Activated T-helper 2 cell treated with anti-CD3 and anti-CD28 coated beads, Interferon-gamma antibody, Interleukin-2, Interleukin-4, amounts not matched to agents 10 μg/mL and 5 μg/mL and 100 μg/mL, durations not matched to agents 14 hours and 24 hours and 36 hours (primary cell): ENCODE measurements at regions of chr11 and their contacts with region 1.

Region 1: DNA sequence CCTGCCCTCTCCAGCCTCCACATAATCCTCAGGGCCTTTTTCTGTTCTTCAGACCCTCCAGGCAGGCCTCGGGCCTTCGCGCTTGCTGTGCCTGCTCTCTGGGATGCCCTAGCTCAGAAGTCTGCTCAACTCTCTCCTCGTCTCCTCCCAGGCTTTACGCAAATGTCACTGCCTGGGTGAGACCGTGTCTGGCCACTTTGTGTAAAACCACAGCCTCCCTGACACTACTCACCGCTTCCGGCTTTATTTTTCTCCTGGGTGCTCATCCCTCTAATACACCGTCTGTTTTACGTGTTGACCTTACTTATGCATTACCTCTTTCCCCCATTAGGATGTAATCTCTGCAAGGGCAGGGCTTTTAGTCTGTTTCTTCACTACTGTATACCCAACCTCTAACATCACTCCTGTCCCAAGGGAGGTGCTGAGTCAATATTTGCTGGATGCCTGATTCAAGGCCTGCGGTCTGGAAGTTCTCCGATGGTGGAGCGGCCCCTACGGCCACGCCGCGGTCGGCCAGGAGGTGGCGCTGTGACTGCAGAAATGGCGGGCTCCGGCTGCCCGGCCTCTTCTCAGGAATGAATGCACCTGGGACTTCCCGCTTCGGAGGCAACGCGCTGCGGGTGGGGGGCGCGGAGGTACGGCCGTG is 58.2 kb upstream of the THY1 start:
- DNase-seq: peak; percentile 57
- H3K4me3 Mint-ChIP-seq: no peak overlapping the region
- H3K27ac Mint-ChIP-seq: no peak overlapping the region
- H3K4me1 Mint-ChIP-seq: peaks cover 2% of the 10 kb centered on the region
- H3K27me3 Mint-ChIP-seq: peaks cover 5% of the 10 kb centered on the region

Region 2: DNA sequence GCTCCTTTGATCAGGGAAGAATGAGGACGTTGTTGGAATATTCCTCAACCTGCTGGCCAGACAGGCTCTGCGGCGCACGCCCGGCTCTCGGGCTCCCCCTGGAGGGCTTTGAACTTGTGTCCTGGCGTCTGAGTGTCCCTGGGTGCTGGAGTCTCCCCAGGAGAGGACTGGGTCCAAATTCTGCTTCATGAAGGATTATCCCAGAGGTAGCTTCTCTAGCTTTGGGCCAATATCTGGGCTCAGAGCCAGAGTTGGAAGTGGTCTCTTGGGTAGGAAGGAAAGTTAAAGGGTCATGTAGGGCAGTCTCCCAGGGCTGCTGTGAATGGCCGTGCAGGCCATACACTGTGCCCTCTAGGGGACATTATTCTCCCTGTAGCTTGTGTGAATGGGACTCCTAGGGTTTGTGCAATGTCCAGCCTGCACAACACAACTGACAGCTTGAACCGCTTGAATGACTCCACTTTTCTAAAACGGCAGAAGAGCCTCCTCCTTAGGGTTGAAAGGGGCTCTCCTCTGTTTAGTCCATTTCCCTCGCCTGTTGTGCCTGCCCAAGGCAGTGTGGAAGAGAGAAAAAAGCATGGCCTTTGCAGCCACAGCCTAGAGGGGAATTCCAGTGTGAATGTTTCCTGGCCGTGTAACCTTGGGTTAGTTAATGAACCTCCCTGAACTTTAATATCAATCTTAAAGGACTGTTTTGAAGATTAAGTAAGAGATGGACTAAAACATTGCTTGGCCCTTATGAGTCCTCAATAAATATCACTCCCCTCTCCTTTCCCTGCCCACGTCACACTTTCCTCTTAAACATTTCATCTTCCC is 53.0 kb after region 1 on chr11:
- intact Hi-C with region 1: loop called (anchors 1 kb)
- DNase-seq: peak; percentile 25
- H3K4me3 Mint-ChIP-seq: no peak overlapping the region
- H3K27ac Mint-ChIP-seq: no peak overlapping the region
- H3K4me1 Mint-ChIP-seq: no peaks in the 10 kb centered on the region
- H3K27me3 Mint-ChIP-seq: peaks cover 3% of the 10 kb centered on the region